Vagina (tissue), 2 donors: ENCODE measurements at regions of chr1 and their contacts with region 1.

Region 1: DNA sequence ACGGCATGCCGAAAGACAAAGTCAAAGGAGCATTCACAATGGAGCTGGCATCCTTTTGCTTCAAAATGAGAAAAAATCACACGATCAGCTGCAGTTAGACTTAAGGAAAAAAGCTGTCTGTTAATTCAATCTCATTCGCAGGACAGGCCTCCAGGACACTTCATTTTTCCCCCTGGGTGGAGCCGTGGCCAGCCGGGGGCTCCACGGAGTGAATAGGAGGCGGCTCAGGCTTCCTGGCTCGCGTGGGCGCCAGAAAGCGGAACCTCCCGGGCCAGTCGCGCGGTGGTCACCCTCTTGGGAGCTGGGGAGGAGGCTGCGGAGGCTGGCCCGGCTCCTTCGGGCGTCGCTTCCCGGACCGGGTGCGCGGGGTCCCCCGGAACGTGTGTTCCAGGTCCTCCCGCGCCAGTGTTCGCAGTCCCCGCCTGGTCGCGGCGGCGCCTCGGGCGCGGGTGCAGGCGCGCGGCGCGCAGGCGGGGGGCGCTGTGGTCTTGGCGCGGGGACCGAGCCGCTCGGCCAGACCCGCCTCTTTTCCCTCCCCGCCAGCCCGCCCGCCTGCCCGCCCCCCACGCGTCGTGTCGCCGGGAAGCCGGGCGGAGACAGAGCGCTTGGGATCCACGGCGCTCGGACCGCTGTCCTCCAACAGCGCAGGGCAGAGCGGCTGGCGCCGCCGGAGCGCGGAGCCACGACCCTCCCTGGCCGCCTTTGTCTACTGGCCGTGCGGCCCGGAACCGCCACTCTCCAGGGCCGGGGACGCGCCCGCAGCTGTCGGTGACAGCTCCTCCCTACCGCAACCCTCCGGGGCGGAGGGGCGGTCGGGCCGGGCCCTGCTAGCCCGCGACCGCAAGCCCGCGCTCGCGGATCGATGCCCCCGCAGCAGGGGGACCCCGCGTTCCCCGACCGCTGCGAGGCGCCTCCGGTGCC is at the start of gene RHOU:
- DNase-seq: peak in 1 of 2 donors; percentile 86
- H3K4me3 ChIP-seq: peak within 1 kb of the TSS; percentile 80 to 94
- H3K27ac ChIP-seq: peak within 1 kb of the TSS; percentile 84
- H3K4me1 ChIP-seq: peaks cover 26% of the 10 kb centered on the region
- H3K27me3 ChIP-seq: no peaks in the 10 kb centered on the region
- CTCF ChIP-seq: peak; percentile 51 to 73 (median 69)
- POLR2A ChIP-seq: peak in 1 of 2 donors; percentile 59
- total RNA-seq, gene RHOU: 10.8 TPM

Region 2: DNA sequence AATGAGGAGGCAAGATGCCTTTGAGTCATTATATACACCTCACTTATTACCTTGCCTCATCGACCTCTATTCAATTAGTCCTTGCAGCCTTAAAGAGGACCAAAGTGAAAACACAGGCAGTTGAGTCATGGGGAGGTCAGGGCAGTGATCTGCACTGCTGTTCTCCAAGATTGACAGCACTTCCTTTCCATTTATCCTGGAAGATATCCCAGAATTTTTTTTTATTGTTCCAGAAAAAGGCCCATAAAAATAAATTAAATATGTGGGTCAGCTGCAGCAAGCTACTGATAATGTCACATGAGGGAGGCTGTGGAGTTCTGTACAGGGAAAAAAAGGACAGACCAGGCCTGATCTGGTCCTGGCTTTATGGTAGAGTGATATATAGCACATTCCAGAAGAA is 1383.7 kb before region 1 on chr1:
- intact Hi-C with region 1: loop called (anchors 5 kb)
- DNase-seq: no peak
- H3K4me3 ChIP-seq: no peak overlapping the region
- H3K27ac ChIP-seq: no peak overlapping the region
- H3K4me1 ChIP-seq: peaks cover 6% of the 10 kb centered on the region
- H3K27me3 ChIP-seq: no peaks in the 10 kb centered on the region
- CTCF ChIP-seq: no peak
- POLR2A ChIP-seq: no peak

Region 3: DNA sequence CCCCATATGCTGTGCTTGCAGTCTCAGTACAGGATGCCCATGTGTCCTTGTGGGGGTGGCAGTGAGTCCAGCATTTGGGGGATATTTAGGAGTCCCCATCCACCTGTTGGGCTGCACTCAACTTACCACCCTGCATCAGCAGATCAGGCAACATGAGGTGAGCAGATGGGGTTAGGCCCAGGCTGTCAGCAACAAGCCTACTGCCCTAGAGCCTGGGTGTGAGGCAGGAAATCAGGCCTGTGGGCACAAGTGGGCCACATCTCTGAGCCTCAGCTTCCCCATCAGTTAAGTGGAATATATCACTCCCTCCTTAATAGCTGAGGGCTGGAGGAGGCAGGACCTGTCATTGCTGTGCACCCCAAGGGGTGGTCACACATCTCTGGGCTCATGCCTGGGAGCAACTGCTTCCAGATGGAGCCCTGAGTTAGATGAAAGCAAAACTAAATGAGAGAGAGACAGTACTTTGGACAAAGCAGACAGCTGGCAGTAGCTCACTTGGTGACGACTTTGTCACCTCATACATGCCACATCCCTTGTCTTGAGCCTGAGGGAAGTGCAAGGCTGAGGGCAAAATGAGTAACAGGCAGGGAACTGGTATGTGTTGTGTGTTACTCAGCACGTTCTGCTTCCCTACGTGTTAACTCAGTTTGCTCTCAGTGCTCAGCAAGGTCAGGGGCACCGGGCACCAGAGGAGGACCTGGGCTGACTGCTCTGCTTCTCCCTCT is 376.9 kb before region 1 on chr1:
- intact Hi-C with region 1: no loop called
- DNase-seq: no peak
- H3K4me3 ChIP-seq: no peak overlapping the region
- H3K27ac ChIP-seq: no peak overlapping the region
- H3K4me1 ChIP-seq: peaks cover 12% of the 10 kb centered on the region
- H3K27me3 ChIP-seq: no peaks in the 10 kb centered on the region
- CTCF ChIP-seq: no peak
- POLR2A ChIP-seq: no peak

Region 4: GRCh38 chr1:228691926-228692325 is 43.2 kb before region 1 on chr1:
- intact Hi-C with region 1: no loop called
- DNase-seq: no peak
- H3K4me3 ChIP-seq: no peak overlapping the region
- H3K27ac ChIP-seq: no peak overlapping the region
- H3K4me1 ChIP-seq: no peaks in the 10 kb centered on the region
- H3K27me3 ChIP-seq: no peaks in the 10 kb centered on the region
- CTCF ChIP-seq: peak in 1 of 3 experiments; percentile 31
- POLR2A ChIP-seq: no peak

Region 5: DNA sequence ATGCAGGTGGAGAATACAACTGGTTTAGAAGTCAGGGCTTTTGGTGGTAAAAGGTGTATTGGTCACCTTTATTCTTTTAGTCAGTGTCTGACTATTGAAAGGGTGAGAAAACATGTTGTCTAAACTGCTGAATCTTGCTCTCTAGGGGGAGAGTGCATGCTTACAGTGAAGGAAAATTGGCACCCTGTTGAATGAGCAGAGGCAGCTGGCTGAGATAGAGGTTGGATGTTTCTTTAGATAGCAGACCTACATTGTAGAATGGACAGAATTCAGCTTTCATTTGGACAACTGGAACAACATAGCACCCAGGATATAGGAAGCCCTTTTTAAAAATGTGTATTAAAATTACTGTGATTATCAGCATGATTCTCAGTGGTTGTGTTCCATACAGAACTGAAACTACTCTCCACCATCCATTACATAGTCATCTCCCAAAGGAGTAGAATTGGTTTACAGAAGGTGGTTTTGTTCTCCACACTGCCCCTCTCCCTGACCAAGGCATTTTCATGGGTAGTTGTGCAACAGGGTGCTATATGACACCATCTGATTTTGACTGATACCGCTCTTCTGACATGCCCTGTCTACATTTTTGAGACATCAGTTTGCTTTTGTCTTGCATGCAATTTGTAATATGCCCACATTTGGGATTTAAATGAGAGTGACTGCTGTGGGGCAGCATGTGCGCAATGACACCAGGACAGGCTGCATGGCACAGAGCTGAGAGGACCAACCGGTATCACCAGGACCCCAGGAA is 16.4 kb after region 1 on chr1:
- intact Hi-C with region 1: no loop called
- DNase-seq: no peak
- H3K4me3 ChIP-seq: no peak overlapping the region
- H3K27ac ChIP-seq: no peak overlapping the region
- H3K4me1 ChIP-seq: no peaks in the 10 kb centered on the region
- H3K27me3 ChIP-seq: no peaks in the 10 kb centered on the region
- CTCF ChIP-seq: no peak
- POLR2A ChIP-seq: no peak

Region 6: DNA sequence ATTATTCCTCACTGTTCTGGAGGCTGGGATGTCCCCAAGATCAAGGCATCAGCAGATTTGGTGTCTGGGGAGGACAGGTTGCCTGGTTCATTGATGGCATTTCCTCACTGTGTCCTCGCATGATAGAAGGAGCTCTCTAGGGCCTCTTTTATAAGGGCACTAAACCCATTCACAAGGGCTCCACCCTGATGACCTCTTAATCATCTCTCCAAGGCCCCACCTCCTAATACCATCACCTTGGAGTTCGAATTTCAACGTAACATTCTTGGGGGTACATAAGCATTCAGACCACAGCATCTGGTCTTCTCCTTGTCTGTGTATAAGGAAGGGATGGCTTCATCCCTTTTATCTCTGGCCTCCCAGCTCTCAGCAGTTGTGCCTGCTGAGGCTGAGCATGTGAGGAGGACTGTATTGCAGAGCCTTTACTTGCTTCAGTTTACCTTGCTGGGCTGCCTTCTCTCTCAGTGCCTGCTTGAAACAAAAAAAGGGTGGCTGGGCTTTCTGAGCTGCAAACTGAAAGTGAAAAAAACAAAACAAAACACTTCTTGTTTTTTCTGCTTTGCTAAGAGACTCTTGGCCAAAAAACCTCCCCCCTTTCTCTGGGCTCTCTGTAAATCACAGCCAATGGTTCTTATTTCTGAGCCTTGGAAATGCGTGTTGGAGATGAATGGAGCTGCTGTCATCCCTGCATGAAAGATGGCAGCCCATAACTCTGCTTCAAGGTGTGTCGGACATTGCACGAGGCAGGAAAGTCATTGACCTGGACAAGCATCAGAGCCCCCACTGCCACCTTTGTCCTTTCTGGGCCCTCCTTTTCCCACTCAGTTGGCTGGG is 76.0 kb after region 1 on chr1:
- intact Hi-C with region 1: no loop called
- DNase-seq: peak; percentile 46 to 80
- H3K4me3 ChIP-seq: no peak overlapping the region
- H3K27ac ChIP-seq: no peak overlapping the region
- H3K4me1 ChIP-seq: peaks cover 12% of the 10 kb centered on the region
- H3K27me3 ChIP-seq: no peaks in the 10 kb centered on the region
- CTCF ChIP-seq: no peak
- POLR2A ChIP-seq: no peak

Region 7: GRCh38 chr1:229227298-229227919 is 492.3 kb after region 1 on chr1:
- intact Hi-C with region 1: loop called (anchors 2 kb)
- DNase-seq: peak in 1 of 2 donors; percentile 94
- H3K4me3 ChIP-seq: no peak overlapping the region
- H3K27ac ChIP-seq: no peak overlapping the region
- H3K4me1 ChIP-seq: peaks cover 48% of the 10 kb centered on the region
- H3K27me3 ChIP-seq: no peaks in the 10 kb centered on the region
- CTCF ChIP-seq: peak; percentile 73 to 79 (median 73)
- POLR2A ChIP-seq: no peak